Ascending aorta (tissue), 2 donors: ENCODE measurements at regions of chr7 and their contacts with region 1.

Region 1: GRCh38 chr7:39580149-39580874 is 14.1 kb downstream of the YAE1 start:
- DNase-seq: peak in 1 of 2 donors; percentile 86
- H3K4me3 ChIP-seq: no peak overlapping the region
- H3K27ac ChIP-seq: no peak overlapping the region
- H3K4me1 ChIP-seq: no peaks in the 10 kb centered on the region
- H3K27me3 ChIP-seq: no peaks in the 10 kb centered on the region
- CTCF ChIP-seq: peak; percentile 71 to 81 (median 79)

Region 2: DNA sequence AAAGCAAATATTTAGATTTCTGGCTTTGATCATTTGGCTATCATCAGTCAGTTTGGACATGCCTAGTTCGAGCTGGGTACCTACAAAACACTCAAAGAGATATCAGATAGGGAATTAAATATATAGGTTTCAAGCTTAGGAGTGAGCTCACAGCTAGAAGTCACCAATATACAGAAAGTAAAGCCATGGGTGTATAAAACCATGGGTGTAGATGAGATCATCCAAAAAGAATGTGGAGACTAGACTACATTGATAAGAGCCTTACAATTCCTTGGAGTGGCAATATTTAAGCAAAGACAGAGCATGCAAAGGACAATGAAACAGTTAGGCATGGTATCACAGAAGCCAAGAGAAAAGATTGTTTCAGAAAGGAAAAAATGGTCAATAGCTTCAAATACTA is 35.8 kb after region 1 on chr7:
- intact Hi-C with region 1: no loop called
- DNase-seq: no peak
- H3K4me3 ChIP-seq: no peak overlapping the region
- H3K27ac ChIP-seq: no peak overlapping the region
- H3K4me1 ChIP-seq: no peaks in the 10 kb centered on the region
- H3K27me3 ChIP-seq: no peaks in the 10 kb centered on the region
- CTCF ChIP-seq: no peak

Region 3: GRCh38 chr7:39746103-39746819 is 165.9 kb after region 1 on chr7:
- intact Hi-C with region 1: loop called (anchors 1 kb)
- DNase-seq: peak in 1 of 2 donors; percentile 86
- H3K4me3 ChIP-seq: no peak overlapping the region
- H3K27ac ChIP-seq: no peak overlapping the region
- H3K4me1 ChIP-seq: no peaks in the 10 kb centered on the region
- H3K27me3 ChIP-seq: no peaks in the 10 kb centered on the region
- CTCF ChIP-seq: peak; percentile 53 to 79 (median 72)